ENCODE measurements at regions of chr2 and their contacts with region 1.

Region 1: GRCh38 chr2:10812362-10813162 is at the start of gene PDIA6:
- DNase-seq: peak; percentile 97
- ATAC-seq: peak; percentile 86
- H3K4me3 ChIP-seq: peak within 1 kb of the TSS; percentile 62 to 97 (median 72)
- H3K4me3 Mint-ChIP-seq: peak within 1 kb of the TSS; percentile 92
- H3K27ac ChIP-seq: peak within 1 kb of the TSS; percentile 71 to 80
- H3K27ac Mint-ChIP-seq: peak within 1 kb of the TSS; percentile 93
- H3K4me1 ChIP-seq: peaks cover 30 to 40% of the 10 kb centered on the region in 2 donors
- H3K4me1 Mint-ChIP-seq: peaks cover 39% of the 10 kb centered on the region
- H3K27me3 ChIP-seq: no peaks in the 10 kb centered on the region
- H3K27me3 Mint-ChIP-seq: no peaks in the 10 kb centered on the region
- CTCF ChIP-seq: no peak
- total RNA-seq, gene PDIA6: 47.9 and 53.8 TPM in 2 replicates

Region 2: DNA sequence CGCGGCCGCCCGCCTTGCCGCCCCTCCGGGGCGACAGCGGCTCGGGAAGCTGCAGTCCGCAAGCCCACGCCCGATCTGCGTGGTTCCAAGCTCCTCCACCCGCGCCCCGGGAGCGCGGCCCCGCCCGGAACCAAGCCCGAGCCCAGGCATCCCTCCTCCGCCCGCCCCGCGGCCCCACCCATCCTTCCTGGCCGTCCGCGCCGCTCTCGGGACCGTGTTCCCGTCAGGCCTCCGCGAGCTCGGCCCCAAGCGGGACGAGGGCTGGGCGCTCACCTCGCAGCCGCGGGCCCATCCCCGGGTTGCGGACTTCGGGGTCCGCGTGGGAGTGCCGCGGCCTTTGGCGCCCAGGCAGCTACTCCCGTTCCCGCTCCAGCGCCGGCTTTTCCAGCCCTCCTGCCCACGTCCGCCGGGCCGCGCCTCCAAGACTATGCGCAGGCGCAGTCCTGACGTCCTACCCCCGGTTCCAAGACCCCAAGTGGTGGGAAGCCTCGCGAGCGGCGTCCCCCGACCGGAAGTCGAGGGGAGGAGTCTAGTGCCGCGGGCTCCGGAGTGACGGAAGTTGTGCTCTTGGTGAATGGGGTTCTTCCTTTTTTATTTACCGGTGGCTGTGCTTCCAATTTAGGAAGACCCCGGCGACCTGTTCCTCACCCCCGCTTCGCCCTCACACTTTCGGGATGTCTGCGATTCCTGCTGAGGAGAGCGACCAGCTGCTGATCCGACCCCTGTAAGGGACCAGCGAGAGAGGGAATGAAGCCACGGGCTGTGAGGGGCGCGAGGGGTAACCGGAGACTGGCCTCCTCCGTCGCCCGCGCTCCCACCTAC is 1389.3 kb before region 1 on chr2 and contains the starts of genes CPSF3 and ITGB1BP1:
- CTCF ChIA-PET with region 1: no interaction called
- POLR2A ChIA-PET with region 1: no interaction called
- intact Hi-C with region 1: loop called (anchors 5 kb)
- DNase-seq: peak; percentile 98
- ATAC-seq: peak; percentile 85
- H3K4me3 ChIP-seq: peak within 1 kb of the TSS; percentile 67 to 98 (median 88)
- H3K4me3 Mint-ChIP-seq: no peak within 1 kb of the TSS
- H3K27ac ChIP-seq: peak within 1 kb of the TSS; percentile 69 to 84
- H3K27ac Mint-ChIP-seq: peak within 1 kb of the TSS; percentile 92
- H3K4me1 ChIP-seq: peaks cover 20 to 29% of the 10 kb centered on the region in 2 donors
- H3K4me1 Mint-ChIP-seq: peaks cover 29% of the 10 kb centered on the region
- H3K27me3 ChIP-seq: no peaks in the 10 kb centered on the region
- H3K27me3 Mint-ChIP-seq: no peaks in the 10 kb centered on the region
- CTCF ChIP-seq: no peak
- total RNA-seq, gene CPSF3: 28.0 and 28.4 TPM in 2 replicates
- total RNA-seq, gene ITGB1BP1: 42.8 and 47.1 TPM in 2 replicates

Region 3: DNA sequence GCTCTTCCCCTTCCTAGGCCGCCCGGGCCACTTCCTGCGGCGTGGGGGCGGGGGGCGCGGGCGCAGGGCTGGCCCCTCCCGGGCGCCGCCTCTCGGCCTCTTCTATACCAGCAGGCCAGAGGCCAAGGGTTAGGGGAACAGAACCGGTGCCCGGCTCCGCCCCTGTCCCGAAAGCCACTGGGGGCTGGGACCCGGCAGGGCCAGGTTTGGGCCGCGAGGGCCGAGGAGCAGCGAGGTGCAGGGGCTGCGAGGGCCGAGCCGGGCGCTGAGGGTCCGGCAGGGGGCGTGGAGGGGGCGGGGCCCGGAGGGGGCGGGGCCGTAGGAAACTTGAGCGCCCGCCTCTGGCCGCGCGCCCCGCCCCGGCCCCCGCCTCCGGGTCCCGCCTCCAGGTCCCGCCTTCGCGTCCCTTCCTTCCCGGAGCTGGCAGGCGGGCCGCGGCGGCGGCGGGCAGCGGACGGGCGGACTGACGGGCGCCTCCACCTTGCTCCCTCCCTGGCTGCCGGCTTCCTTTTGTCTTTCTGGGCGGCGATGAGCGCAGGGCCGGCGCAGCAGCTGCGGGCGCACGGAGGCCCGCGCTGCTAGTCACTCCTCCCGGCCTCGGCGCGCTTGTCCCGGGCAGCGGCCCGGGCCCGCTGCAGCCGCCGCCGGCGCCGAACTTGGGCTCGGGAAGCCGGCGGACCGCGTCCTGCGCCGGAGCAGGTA is 509.9 kb before region 1 on chr2 and contains the start of gene HPCAL1:
- CTCF ChIA-PET with region 1: no interaction called
- POLR2A ChIA-PET with region 1: no interaction called
- intact Hi-C with region 1: loop called (anchors 2 kb)
- DNase-seq: peak; percentile 90
- ATAC-seq: peak; percentile 81
- H3K4me3 ChIP-seq: peak within 1 kb of the TSS; percentile 67 to 78 (median 76)
- H3K4me3 Mint-ChIP-seq: peak within 1 kb of the TSS; percentile 99
- H3K27ac ChIP-seq: peak within 1 kb of the TSS; percentile 71 to 77
- H3K27ac Mint-ChIP-seq: peak within 1 kb of the TSS; percentile 88
- H3K4me1 ChIP-seq: peaks cover 39 to 51% of the 10 kb centered on the region in 2 donors
- H3K4me1 Mint-ChIP-seq: peaks cover 60% of the 10 kb centered on the region
- H3K27me3 ChIP-seq: no peaks in the 10 kb centered on the region
- H3K27me3 Mint-ChIP-seq: no peaks in the 10 kb centered on the region
- CTCF ChIP-seq: peak; percentile 80
- total RNA-seq, gene HPCAL1: 60.3 and 64.1 TPM in 2 replicates

Region 4: GRCh38 chr2:10750610-10751009 is 62.0 kb before region 1 on chr2:
- CTCF ChIA-PET with region 1: no interaction called
- POLR2A ChIA-PET with region 1: no interaction called
- intact Hi-C with region 1: loop called (anchors 1 kb)
- DNase-seq: no peak
- ATAC-seq: no peak
- H3K4me3 ChIP-seq: no peak overlapping the region
- H3K4me3 Mint-ChIP-seq: no peak overlapping the region
- H3K27ac ChIP-seq: no peak overlapping the region
- H3K27ac Mint-ChIP-seq: no peak overlapping the region
- H3K4me1 ChIP-seq: peaks cover 8 to 9% of the 10 kb centered on the region in 2 donors
- H3K4me1 Mint-ChIP-seq: peaks cover 11% of the 10 kb centered on the region
- H3K27me3 ChIP-seq: no peaks in the 10 kb centered on the region
- H3K27me3 Mint-ChIP-seq: no peaks in the 10 kb centered on the region
- CTCF ChIP-seq: no peak

Region 5: GRCh38 chr2:10792660-10793397 is 19.7 kb before region 1 on chr2:
- CTCF ChIA-PET with region 1: no interaction called
- POLR2A ChIA-PET with region 1: no interaction called
- intact Hi-C with region 1: no loop called
- DNase-seq: no peak
- ATAC-seq: no peak
- H3K4me3 ChIP-seq: no peak overlapping the region
- H3K4me3 Mint-ChIP-seq: no peak overlapping the region
- H3K27ac ChIP-seq: peak overlapping the region in 1 of 2 donors; percentile 4
- H3K27ac Mint-ChIP-seq: no peak overlapping the region
- H3K4me1 ChIP-seq: no peaks in the 10 kb centered on the region
- H3K4me1 Mint-ChIP-seq: peaks cover 7% of the 10 kb centered on the region
- H3K27me3 ChIP-seq: no peaks in the 10 kb centered on the region
- H3K27me3 Mint-ChIP-seq: no peaks in the 10 kb centered on the region
- CTCF ChIP-seq: no peak

Region 6: DNA sequence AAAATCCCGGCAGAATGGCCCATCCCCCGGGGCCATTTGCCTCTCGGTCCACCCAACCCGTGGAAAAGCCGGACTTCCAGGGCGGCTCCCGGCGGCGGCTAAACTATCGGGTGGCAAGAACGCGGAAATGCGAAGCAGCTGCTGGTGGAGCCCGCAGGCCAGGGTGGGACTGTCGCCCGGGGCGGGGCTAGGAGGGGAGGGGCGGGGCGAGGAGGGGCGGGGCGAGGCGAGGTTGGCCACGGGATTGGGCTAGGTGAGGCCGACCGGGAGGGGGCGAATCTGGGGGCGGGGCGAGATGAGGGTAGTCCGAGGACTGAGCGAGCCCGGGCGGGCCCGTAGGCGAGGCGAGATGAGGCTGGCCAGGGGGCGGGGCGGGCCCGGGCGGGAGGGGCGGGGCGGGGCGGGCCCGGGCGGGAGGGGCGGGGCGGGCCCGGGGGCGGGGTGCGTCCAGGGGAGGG is 342.4 kb after region 1 on chr2:
- CTCF ChIA-PET with region 1: no interaction called
- POLR2A ChIA-PET with region 1: no interaction called
- intact Hi-C with region 1: loop called (anchors 1 kb)
- DNase-seq: peak; percentile 96
- ATAC-seq: peak; percentile 89
- H3K4me3 ChIP-seq: peak overlapping the region; percentile 30 to 87 (median 81)
- H3K4me3 Mint-ChIP-seq: peak overlapping the region; percentile 88
- H3K27ac ChIP-seq: peak overlapping the region; percentile 89 to 93
- H3K27ac Mint-ChIP-seq: peak overlapping the region; percentile 93
- H3K4me1 ChIP-seq: peaks cover 15 to 20% of the 10 kb centered on the region in 2 donors
- H3K4me1 Mint-ChIP-seq: peaks cover 18% of the 10 kb centered on the region
- H3K27me3 ChIP-seq: peaks cover 0 to 5% (median 0%) of the 10 kb centered on the region in 4 experiments
- H3K27me3 Mint-ChIP-seq: no peaks in the 10 kb centered on the region
- CTCF ChIP-seq: no peak

Region 7: GRCh38 chr2:11465497-11466406 is 653.2 kb after region 1 on chr2 and contains the start of gene E2F6:
- CTCF ChIA-PET with region 1: no interaction called
- POLR2A ChIA-PET with region 1: no interaction called
- intact Hi-C with region 1: loop called (anchors 10 kb)
- DNase-seq: peak; percentile 88
- ATAC-seq: peak; percentile 73
- H3K4me3 ChIP-seq: peak within 1 kb of the TSS; percentile 66 to 97 (median 92)
- H3K4me3 Mint-ChIP-seq: peak within 1 kb of the TSS; percentile 97
- H3K27ac ChIP-seq: peak within 1 kb of the TSS; percentile 1 to 79
- H3K27ac Mint-ChIP-seq: peak within 1 kb of the TSS; percentile 94
- H3K4me1 ChIP-seq: peaks cover 7 to 13% of the 10 kb centered on the region in 2 donors
- H3K4me1 Mint-ChIP-seq: peaks cover 23% of the 10 kb centered on the region
- H3K27me3 ChIP-seq: no peaks in the 10 kb centered on the region
- H3K27me3 Mint-ChIP-seq: no peaks in the 10 kb centered on the region
- CTCF ChIP-seq: no peak
- total RNA-seq, gene E2F6: 10.0 and 10.1 TPM in 2 replicates

Measured in B cell (primary cell).